CD4-positive, alpha-beta memory T cell (primary cell): ENCODE measurements at regions of chr5 and their contacts with region 1.

Region 1: GRCh38 chr5:142151436-142152383 is 43.1 kb downstream of the NDFIP1 start:
- DNase-seq: peak; percentile 56 to 65 (median 61)
- H3K4me3 ChIP-seq: no peak overlapping the region
- H3K4me3 Mint-ChIP-seq: no peak overlapping the region
- H3K27ac ChIP-seq: no peak overlapping the region
- H3K27ac Mint-ChIP-seq: peak overlapping the region in 2 of 7 donors; percentile 28 to 61
- H3K4me1 ChIP-seq: no peaks in the 10 kb centered on the region
- H3K4me1 Mint-ChIP-seq: peaks cover 0 to 6% (median 4%) of the 10 kb centered on the region in 4 donors
- H3K27me3 ChIP-seq: no peaks in the 10 kb centered on the region
- H3K27me3 Mint-ChIP-seq: no peaks in the 10 kb centered on the region

Region 2: DNA sequence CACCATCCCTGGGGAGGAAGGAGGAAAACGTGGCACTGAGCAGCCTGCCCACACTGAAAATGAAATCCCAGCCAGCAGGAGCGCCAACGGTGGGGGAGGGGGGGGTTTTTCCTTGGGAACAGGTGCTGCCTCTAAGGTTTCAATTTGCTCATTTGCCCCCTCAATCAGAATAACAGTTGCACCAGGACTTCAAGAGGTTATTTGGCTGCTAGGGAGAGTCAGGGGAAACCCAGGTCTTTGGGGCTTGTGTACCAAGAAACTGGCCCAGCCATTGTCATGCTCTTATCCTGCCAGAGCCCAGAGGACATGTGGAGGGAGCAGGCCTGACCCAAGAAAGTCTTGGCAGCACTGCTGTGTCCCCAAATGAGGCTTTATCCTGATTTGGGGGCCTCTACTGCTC is 23.3 kb after region 1 on chr5:
- CTCF ChIA-PET with region 1: no interaction called
- POLR2A ChIA-PET with region 1: no interaction called
- intact Hi-C with region 1: no loop called
- DNase-seq: no peak
- H3K4me3 ChIP-seq: no peak overlapping the region
- H3K4me3 Mint-ChIP-seq: peak overlapping the region in 1 of 8 donors; percentile 47
- H3K27ac ChIP-seq: no peak overlapping the region
- H3K27ac Mint-ChIP-seq: no peak overlapping the region
- H3K4me1 ChIP-seq: no peaks in the 10 kb centered on the region
- H3K4me1 Mint-ChIP-seq: no peaks in the 10 kb centered on the region
- H3K27me3 ChIP-seq: no peaks in the 10 kb centered on the region
- H3K27me3 Mint-ChIP-seq: peaks cover 0 to 4% of the 10 kb centered on the region in 2 donors

Region 3: GRCh38 chr5:142192286-142193113 is 40.8 kb after region 1 on chr5:
- CTCF ChIA-PET with region 1: no interaction called
- POLR2A ChIA-PET with region 1: no interaction called
- intact Hi-C with region 1: no loop called
- DNase-seq: no peak
- H3K4me3 ChIP-seq: no peak overlapping the region
- H3K4me3 Mint-ChIP-seq: no peak overlapping the region
- H3K27ac ChIP-seq: no peak overlapping the region
- H3K27ac Mint-ChIP-seq: no peak overlapping the region
- H3K4me1 ChIP-seq: no peaks in the 10 kb centered on the region
- H3K4me1 Mint-ChIP-seq: peaks cover 2 to 4% (median 4%) of the 10 kb centered on the region in 4 donors
- H3K27me3 ChIP-seq: no peaks in the 10 kb centered on the region
- H3K27me3 Mint-ChIP-seq: no peaks in the 10 kb centered on the region

Region 4: GRCh38 chr5:142324871-142325724 is 173.4 kb after region 1 on chr5 and contains the start of gene SPRY4:
- CTCF ChIA-PET with region 1: interaction called, 3 read pairs
- POLR2A ChIA-PET with region 1: no interaction called
- intact Hi-C with region 1: loop called (anchors 10 kb)
- DNase-seq: peak; percentile 74 to 81 (median 80)
- H3K4me3 ChIP-seq: peak within 1 kb of the TSS; percentile 39 to 50
- H3K4me3 Mint-ChIP-seq: peak within 1 kb of the TSS; percentile 83 to 95 (median 88)
- H3K27ac ChIP-seq: no peak within 1 kb of the TSS
- H3K27ac Mint-ChIP-seq: peak within 1 kb of the TSS in 3 of 7 donors; percentile 73 to 88 (median 76)
- H3K4me1 ChIP-seq: peaks cover 29% of the 10 kb centered on the region
- H3K4me1 Mint-ChIP-seq: peaks cover 9 to 34% (median 20%) of the 10 kb centered on the region in 4 donors
- H3K27me3 ChIP-seq: peaks cover 15% of the 10 kb centered on the region
- H3K27me3 Mint-ChIP-seq: peaks cover 24 to 36% of the 10 kb centered on the region in 2 donors
- total RNA-seq, gene SPRY4: not detected

Region 5: GRCh38 chr5:142441616-142442015 is 289.9 kb after region 1 on chr5:
- CTCF ChIA-PET with region 1: interaction called, 5 read pairs
- POLR2A ChIA-PET with region 1: no interaction called
- intact Hi-C with region 1: loop called (anchors 1 kb)
- DNase-seq: peak in 2 of 5 donors; percentile 16 to 30
- H3K4me3 ChIP-seq: no peak overlapping the region
- H3K4me3 Mint-ChIP-seq: peak overlapping the region in 5 of 8 donors; percentile 24 to 75 (median 60)
- H3K27ac ChIP-seq: no peak overlapping the region
- H3K27ac Mint-ChIP-seq: peak overlapping the region in 1 of 7 donors; percentile 24
- H3K4me1 ChIP-seq: peaks cover 36% of the 10 kb centered on the region
- H3K4me1 Mint-ChIP-seq: peaks cover 29 to 48% (median 39%) of the 10 kb centered on the region in 4 donors
- H3K27me3 ChIP-seq: no peaks in the 10 kb centered on the region
- H3K27me3 Mint-ChIP-seq: peaks cover 0 to 1% of the 10 kb centered on the region in 2 donors

Region 6: DNA sequence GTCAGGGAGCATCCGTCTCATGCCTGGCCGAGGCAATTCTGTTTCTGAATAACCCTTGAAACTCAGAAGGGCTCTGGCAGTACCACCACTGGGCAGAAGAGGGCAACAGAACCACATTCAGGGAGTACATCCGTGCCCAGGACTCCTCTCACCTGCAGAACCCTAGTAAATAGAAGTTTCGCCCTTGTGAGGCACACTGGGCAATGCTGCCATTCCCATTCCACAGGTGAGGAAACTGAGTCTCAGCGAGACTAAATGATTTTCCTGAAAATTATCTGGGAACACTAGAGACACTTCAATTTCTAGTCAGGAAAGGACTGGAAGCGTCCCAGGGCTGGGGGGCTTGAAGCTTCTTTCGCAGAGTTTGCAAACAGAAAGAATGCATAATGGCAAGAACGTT is 459.4 kb after region 1 on chr5:
- CTCF ChIA-PET with region 1: interaction called, 3 read pairs
- POLR2A ChIA-PET with region 1: no interaction called
- intact Hi-C with region 1: loop called (anchors 2 kb)
- DNase-seq: peak; percentile 48 to 54 (median 48)
- H3K4me3 ChIP-seq: no peak overlapping the region
- H3K4me3 Mint-ChIP-seq: no peak overlapping the region
- H3K27ac ChIP-seq: no peak overlapping the region
- H3K27ac Mint-ChIP-seq: no peak overlapping the region
- H3K4me1 ChIP-seq: peaks cover 5% of the 10 kb centered on the region
- H3K4me1 Mint-ChIP-seq: peaks cover 0 to 6% (median 3%) of the 10 kb centered on the region in 4 donors
- H3K27me3 ChIP-seq: no peaks in the 10 kb centered on the region
- H3K27me3 Mint-ChIP-seq: peaks cover 9 to 20% of the 10 kb centered on the region in 2 donors

Region 7: GRCh38 chr5:142699184-142699720 is 547.5 kb after region 1 on chr5:
- CTCF ChIA-PET with region 1: interaction called, 12 read pairs
- POLR2A ChIA-PET with region 1: no interaction called
- intact Hi-C with region 1: loop called (anchors 1 kb)
- DNase-seq: peak; percentile 68 to 73 (median 72)
- H3K4me3 ChIP-seq: no peak overlapping the region
- H3K4me3 Mint-ChIP-seq: no peak overlapping the region
- H3K27ac ChIP-seq: no peak overlapping the region
- H3K27ac Mint-ChIP-seq: no peak overlapping the region
- H3K4me1 ChIP-seq: no peaks in the 10 kb centered on the region
- H3K4me1 Mint-ChIP-seq: peaks cover 0 to 2% (median under 1%) of the 10 kb centered on the region in 4 donors
- H3K27me3 ChIP-seq: no peaks in the 10 kb centered on the region
- H3K27me3 Mint-ChIP-seq: peaks cover 2% of the 10 kb centered on the region in 2 donors